Endothelial cell of umbilical vein (primary cell): ENCODE measurements at regions of chr10 and their contacts with region 1.

Region 1: GRCh38 chr10:6202684-6203330 is at the start of gene PFKFB3:
- DNase-seq: peak; percentile 93
- H3K4me3 ChIP-seq: peak within 1 kb of the TSS; percentile 73 to 87 (median 83)
- H3K27ac ChIP-seq: peak within 1 kb of the TSS; percentile 56
- H3K4me1 ChIP-seq: peaks cover 23% of the 10 kb centered on the region
- H3K27me3 ChIP-seq: no peaks in the 10 kb centered on the region
- CTCF ChIP-seq: peak; percentile 90 to 98
- POLR2A ChIP-seq: peak; percentile 98
- total RNA-seq, gene PFKFB3: 33.7 and 35.6 TPM in 2 replicates

Region 2: GRCh38 chr10:5948999-5949759 is 253.6 kb before region 1 on chr10:
- CTCF ChIA-PET with region 1: interaction called, 4 read pairs
- POLR2A ChIA-PET with region 1: no interaction called
- dilution Hi-C with region 1: no loop called
- intact Hi-C with region 1: loop called (anchors 5 kb)
- DNase-seq: peak; percentile 82
- H3K4me3 ChIP-seq: no peak overlapping the region
- H3K27ac ChIP-seq: no peak overlapping the region
- H3K4me1 ChIP-seq: peaks cover 32% of the 10 kb centered on the region
- H3K27me3 ChIP-seq: no peaks in the 10 kb centered on the region
- CTCF ChIP-seq: peak; percentile 45 to 66
- POLR2A ChIP-seq: no peak

Region 3: GRCh38 chr10:6088721-6089390 is 114.0 kb before region 1 on chr10 and contains the start of gene RBM17:
- CTCF ChIA-PET with region 1: interaction called, 16 read pairs
- POLR2A ChIA-PET with region 1: interaction called, 4 read pairs
- dilution Hi-C with region 1: no loop called
- intact Hi-C with region 1: loop called (anchors 1 kb)
- DNase-seq: peak; percentile 97
- H3K4me3 ChIP-seq: peak within 1 kb of the TSS; percentile 59 to 85 (median 74)
- H3K27ac ChIP-seq: peak within 1 kb of the TSS; percentile 83
- H3K4me1 ChIP-seq: peaks cover 37% of the 10 kb centered on the region
- H3K27me3 ChIP-seq: no peaks in the 10 kb centered on the region
- CTCF ChIP-seq: peak; percentile 100
- POLR2A ChIP-seq: peak; percentile 83
- total RNA-seq, gene RBM17: 148 TPM in 2 replicates

Region 4: DNA sequence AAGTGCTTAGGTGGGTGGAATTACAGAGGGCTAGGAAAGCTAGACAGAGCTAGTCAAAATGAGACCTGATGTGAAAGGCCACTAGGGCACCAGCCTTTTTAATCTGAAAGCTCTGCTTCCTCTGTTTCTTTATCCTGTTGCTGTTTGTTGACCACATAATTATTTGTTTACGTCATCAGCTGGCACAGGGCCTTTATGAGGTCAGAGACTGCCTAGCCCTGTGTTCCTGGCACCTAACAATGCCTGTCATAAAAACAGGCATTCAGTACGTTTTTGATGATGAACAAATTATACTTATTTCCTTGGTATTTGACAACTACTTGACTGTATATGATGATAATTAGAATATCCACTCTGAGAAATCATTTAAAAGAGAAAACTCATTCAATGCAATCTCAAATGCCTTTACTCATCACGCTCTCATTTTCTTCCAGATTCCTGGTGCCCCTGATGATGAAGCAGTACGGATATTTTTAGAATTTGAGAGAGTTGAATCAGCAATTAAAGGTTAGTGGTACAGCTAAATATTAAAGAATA is 87.9 kb before region 1 on chr10:
- CTCF ChIA-PET with region 1: interaction called, 6 read pairs
- POLR2A ChIA-PET with region 1: interaction called, 3 read pairs
- dilution Hi-C with region 1: no loop called
- intact Hi-C with region 1: loop called (anchors 1 kb)
- DNase-seq: peak; percentile 60
- H3K4me3 ChIP-seq: no peak overlapping the region
- H3K27ac ChIP-seq: peak overlapping the region; percentile 74
- H3K4me1 ChIP-seq: peaks cover 13% of the 10 kb centered on the region
- H3K27me3 ChIP-seq: no peaks in the 10 kb centered on the region
- CTCF ChIP-seq: no peak
- POLR2A ChIP-seq: no peak

Region 5: DNA sequence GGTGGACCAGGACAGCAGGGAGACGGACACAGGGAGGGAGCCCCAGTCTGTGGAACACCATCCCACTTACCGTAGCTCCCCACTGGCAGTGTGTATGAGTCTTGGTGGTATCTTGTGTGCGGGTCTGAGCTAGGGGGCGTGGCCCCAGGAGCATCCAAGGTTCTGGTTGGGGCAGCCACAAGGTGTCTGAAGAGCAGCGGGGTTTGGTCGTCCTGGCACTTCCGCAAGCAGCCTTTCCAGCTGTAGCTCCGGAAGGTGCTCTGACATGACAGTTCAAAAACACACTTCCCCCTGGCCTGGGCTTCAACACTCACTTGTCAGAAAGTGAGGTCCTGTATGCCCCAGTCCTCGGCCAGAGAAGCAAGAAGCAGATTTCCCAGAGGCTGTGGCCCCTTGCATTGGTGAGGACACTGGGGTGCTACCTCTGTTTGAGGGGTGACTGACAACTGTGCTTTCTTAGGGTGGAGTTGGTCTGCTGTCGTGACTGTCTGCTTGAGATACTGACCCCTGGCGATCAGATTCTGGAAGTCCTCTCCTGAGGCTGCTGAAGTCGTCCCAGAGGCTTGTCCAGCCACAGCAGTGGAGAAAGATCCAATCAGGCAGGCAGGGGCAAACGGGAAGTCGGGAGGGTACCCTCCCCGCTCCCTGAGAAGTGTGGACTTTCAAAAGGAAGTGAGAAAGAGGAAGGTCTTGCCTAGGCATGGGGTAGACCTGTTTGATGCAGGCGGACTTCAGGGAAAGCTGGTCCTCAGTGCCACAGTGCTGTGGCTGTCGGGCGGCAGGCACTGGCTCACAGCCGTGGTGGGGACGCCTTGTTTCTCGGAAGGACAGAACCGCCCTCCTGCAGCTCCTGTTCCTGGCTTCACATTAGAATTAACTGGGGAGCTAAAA is 51.5 kb before region 1 on chr10:
- CTCF ChIA-PET with region 1: interaction called, 15 read pairs
- POLR2A ChIA-PET with region 1: interaction called, 6 read pairs
- dilution Hi-C with region 1: no loop called
- intact Hi-C with region 1: no loop called
- DNase-seq: peak; percentile 83
- H3K4me3 ChIP-seq: peak overlapping the region in 1 of 3 experiments; percentile 16
- H3K27ac ChIP-seq: peak overlapping the region; percentile 25
- H3K4me1 ChIP-seq: peaks cover 9% of the 10 kb centered on the region
- H3K27me3 ChIP-seq: no peaks in the 10 kb centered on the region
- CTCF ChIP-seq: peak; percentile 72 to 78
- POLR2A ChIP-seq: no peak

Region 6: DNA sequence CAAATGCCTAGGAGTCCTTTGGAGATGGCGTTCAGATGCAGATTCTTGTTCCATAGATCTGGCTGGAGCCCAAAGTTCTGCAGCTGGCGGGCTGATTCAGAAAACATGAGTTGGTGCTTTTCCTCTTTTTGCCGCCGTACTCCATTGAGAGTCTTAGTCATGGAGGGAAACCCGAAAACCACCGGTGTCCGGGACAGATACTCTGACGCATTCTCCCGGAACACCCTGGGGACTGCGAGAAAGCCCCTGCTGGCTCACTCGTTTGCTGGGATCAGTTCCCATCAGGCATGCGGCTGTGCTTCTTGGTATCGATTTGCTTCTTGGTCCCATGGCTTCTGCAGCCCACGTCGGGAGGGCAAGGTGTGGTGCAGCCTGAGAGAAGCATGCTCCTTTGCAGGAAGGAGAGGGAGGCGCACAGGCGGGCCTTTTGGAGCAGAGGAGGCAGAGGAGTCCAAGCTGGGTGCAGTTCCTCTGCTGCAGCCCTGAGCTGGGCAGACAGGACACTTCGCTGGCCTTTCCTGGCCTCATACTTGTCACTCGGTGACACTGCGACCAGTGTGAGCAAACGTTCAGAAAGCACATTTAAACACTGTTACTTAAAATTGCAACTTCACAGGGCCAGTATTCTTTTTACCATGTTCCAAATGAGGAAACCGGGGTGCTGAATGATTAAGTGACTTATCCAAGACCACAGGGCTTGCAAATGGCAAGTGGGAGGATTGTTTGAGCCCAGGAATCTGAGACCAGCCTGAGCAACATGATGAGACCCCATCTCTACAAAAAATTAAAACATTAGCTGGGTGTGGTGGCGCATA is 30.7 kb before region 1 on chr10:
- CTCF ChIA-PET with region 1: interaction called, 16 read pairs
- POLR2A ChIA-PET with region 1: interaction called, 16 read pairs
- dilution Hi-C with region 1: no loop called
- intact Hi-C with region 1: loop called (anchors 1 kb)
- DNase-seq: peak; percentile 88
- H3K4me3 ChIP-seq: no peak overlapping the region
- H3K27ac ChIP-seq: peak overlapping the region; percentile 74
- H3K4me1 ChIP-seq: peaks cover 42% of the 10 kb centered on the region
- H3K27me3 ChIP-seq: no peaks in the 10 kb centered on the region
- CTCF ChIP-seq: no peak
- POLR2A ChIP-seq: no peak

Region 7: DNA sequence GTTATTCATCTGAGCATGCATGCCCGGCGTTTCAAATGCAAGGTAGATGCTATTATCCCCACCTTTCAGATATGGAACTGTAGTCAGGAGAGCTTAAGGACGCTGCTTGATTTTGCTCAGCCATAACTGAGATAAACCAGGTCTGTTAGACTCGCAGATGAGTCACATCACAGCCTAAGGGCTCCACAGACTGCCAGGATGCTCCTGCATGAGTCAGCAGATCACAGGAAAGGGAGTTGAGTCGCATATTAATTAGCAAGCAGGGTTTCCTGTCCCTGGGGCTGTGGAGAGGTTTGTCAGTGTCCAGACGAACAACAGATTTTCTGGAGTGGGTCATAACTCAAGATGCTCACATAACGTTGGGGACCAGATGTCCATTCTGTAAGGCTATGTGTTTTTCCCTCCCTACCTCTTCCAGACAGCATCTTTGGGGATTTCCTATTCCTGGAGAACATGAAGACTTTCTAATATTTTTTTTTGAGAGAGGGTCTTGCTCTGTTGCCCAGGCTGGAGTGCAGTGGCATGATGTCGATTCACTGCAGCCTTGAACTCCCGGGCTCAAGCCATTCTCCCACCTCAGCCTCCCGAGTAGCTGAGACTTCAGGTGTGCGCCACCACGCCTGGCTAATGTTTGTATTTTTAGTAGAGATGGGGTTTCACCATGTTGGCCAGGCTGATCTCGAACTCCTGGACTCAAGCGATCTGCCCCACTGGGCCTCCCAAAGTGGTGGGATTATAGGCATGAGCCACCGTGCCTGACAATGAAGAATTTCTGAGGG is 36.6 kb after region 1 on chr10:
- CTCF ChIA-PET with region 1: interaction called, 3 read pairs
- POLR2A ChIA-PET with region 1: interaction called, 6 read pairs
- dilution Hi-C with region 1: no loop called
- intact Hi-C with region 1: loop called (anchors 2 kb)
- DNase-seq: peak; percentile 94
- H3K4me3 ChIP-seq: no peak overlapping the region
- H3K27ac ChIP-seq: peak overlapping the region; percentile 50
- H3K4me1 ChIP-seq: peaks cover 13% of the 10 kb centered on the region
- H3K27me3 ChIP-seq: no peaks in the 10 kb centered on the region
- CTCF ChIP-seq: no peak
- POLR2A ChIP-seq: no peak